Heart left ventricle (tissue), 16 donors: ENCODE measurements at regions of chr7 and their contacts with region 1.

Region 1: DNA sequence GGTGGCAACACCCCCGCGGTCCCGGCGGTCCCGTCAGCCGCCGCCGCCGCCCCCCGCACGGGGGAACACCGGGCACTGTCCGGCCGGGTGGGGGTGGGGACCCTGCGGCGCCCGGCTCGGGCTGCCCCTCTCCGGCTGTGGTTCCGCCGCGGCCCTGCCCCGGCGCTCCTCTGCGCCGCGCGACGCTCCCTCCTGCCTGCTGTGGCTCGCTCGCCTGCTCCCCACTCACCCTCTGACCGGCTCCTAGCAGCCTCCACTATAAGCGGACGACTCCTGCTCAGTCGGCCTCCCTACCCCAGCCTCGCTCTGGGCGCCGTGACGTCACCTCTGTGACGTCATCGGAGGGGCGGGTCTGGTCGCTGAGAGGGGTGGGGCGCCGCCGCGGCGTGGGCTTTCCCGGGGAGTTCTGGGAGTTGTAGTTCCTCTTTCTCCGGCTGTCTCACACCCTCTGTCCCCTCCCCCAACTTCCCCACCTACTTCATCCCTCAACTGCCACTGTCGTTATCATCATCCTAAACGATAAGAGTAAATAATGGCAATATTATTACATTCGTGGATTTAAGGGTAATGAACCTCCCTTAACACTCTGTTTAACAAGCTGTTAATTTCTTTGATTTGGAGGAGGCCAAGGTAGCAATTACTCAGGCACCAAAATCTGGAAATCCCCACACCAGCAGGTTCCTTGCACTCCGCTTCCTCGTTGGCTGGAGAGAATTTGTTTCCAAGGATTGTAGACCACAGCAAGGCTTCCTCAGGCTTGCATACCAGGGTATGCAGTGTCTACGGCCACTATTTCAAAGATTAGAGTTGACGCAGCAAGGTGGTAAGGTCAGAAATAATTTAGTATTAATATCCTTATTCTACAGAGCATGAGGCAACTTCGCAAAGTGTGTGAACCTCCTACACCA is at the start of gene UBE2H:
- DNase-seq: peak; percentile 91 to 97 (median 92)
- ATAC-seq: peak; percentile 83 to 93 (median 86)
- H3K4me3 ChIP-seq: peak within 1 kb of the TSS; percentile 61 to 99 (median 87)
- H3K27ac ChIP-seq: peak within 1 kb of the TSS; percentile 93 to 99 (median 96)
- H3K4me1 ChIP-seq: peaks cover 7 to 39% (median 21%) of the 10 kb centered on the region in 12 donors
- H3K27me3 ChIP-seq: no peaks in the 10 kb centered on the region
- CTCF ChIP-seq: no peak
- POLR2A ChIP-seq: peak; percentile 98 to 99
- total RNA-seq, gene UBE2H: 92.8 to 219 (median 130) TPM

Region 2: DNA sequence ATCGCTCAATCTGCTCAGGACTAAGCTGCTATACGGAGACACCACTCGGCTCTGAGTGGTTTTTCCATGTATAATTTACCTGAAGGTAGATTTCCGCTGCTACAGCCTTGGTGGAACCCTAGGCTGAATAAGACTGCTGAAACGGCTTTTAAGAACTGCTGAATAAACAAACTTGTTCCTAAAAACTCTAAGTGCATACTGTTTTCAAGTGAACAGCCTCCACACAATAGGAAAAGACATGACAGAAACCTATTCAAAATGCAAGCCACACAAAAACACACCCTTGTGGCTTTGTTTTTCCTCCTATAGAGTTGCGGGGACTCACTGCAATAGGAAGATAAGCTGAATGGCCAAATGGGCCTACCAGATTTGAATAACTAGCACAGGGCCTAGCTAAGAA is 117.3 kb before region 1 on chr7:
- intact Hi-C with region 1: loop called in 9 of 10 experiments (anchors 2 to 10 kb)
- DNase-seq: no peak
- ATAC-seq: no peak
- H3K4me3 ChIP-seq: no peak overlapping the region
- H3K27ac ChIP-seq: peak overlapping the region in 4 of 12 donors; percentile 21 to 65 (median 47)
- H3K4me1 ChIP-seq: peaks cover 6 to 55% (median 27%) of the 10 kb centered on the region in 12 donors
- H3K27me3 ChIP-seq: no peaks in the 10 kb centered on the region
- CTCF ChIP-seq: no peak
- POLR2A ChIP-seq: no peak

Region 3: GRCh38 chr7:129845178-129845971 is 107.5 kb before region 1 on chr7:
- intact Hi-C with region 1: loop called in 1 of 10 experiments (anchors 10 kb)
- DNase-seq: no peak
- ATAC-seq: peak; percentile 17 to 58 (median 34)
- H3K4me3 ChIP-seq: no peak overlapping the region
- H3K27ac ChIP-seq: peak overlapping the region in 9 of 12 donors; percentile 6 to 67 (median 40)
- H3K4me1 ChIP-seq: peaks cover 2 to 78% (median 53%) of the 10 kb centered on the region in 12 donors
- H3K27me3 ChIP-seq: no peaks in the 10 kb centered on the region
- CTCF ChIP-seq: no peak
- POLR2A ChIP-seq: no peak

Region 4: GRCh38 chr7:129864042-129864441 is 88.9 kb before region 1 on chr7:
- intact Hi-C with region 1: loop called in 4 of 10 experiments (anchors 5 kb)
- DNase-seq: peak in 4 of 5 donors; percentile 22 to 60 (median 40)
- ATAC-seq: peak; percentile 61 to 88 (median 70)
- H3K4me3 ChIP-seq: no peak overlapping the region
- H3K27ac ChIP-seq: peak overlapping the region; percentile 9 to 90 (median 83)
- H3K4me1 ChIP-seq: peaks cover 3 to 91% (median 78%) of the 10 kb centered on the region in 12 donors
- H3K27me3 ChIP-seq: no peaks in the 10 kb centered on the region
- CTCF ChIP-seq: no peak
- POLR2A ChIP-seq: no peak

Region 5: GRCh38 chr7:129882531-129882930 is 70.4 kb before region 1 on chr7:
- intact Hi-C with region 1: loop called in 1 of 10 experiments (anchors 10 kb)
- DNase-seq: no peak
- ATAC-seq: no peak
- H3K4me3 ChIP-seq: no peak overlapping the region
- H3K27ac ChIP-seq: no peak overlapping the region
- H3K4me1 ChIP-seq: peaks cover 0 to 45% (median 22%) of the 10 kb centered on the region in 12 donors
- H3K27me3 ChIP-seq: no peaks in the 10 kb centered on the region
- CTCF ChIP-seq: no peak
- POLR2A ChIP-seq: no peak

Region 6: DNA sequence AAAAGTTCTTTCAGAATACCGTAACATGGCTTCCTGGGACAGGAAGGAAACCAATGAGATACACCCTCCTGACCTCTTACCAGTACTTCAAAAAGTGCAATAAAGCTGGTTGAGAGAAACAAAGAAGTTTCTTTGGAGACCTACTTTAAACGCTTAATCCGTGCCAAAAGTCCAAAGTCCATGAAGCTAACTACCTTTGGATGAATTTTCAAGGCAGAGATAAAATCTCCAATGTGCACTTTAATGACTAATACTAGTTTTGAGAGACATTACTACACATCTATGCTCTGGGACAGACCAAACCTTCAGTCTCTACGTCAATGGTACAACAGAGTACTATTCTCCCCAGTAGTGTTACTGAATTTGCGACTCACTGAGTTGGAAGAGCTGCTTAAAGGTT is 46.2 kb before region 1 on chr7:
- intact Hi-C with region 1: loop called in 3 of 10 experiments (anchors 5 kb)
- DNase-seq: no peak
- ATAC-seq: peak; percentile 56 to 84 (median 72)
- H3K4me3 ChIP-seq: no peak overlapping the region
- H3K27ac ChIP-seq: peak overlapping the region in 11 of 12 donors; percentile 31 to 85 (median 54)
- H3K4me1 ChIP-seq: peaks cover 0 to 75% (median 50%) of the 10 kb centered on the region in 12 donors
- H3K27me3 ChIP-seq: no peaks in the 10 kb centered on the region
- CTCF ChIP-seq: no peak
- POLR2A ChIP-seq: no peak

Region 7: DNA sequence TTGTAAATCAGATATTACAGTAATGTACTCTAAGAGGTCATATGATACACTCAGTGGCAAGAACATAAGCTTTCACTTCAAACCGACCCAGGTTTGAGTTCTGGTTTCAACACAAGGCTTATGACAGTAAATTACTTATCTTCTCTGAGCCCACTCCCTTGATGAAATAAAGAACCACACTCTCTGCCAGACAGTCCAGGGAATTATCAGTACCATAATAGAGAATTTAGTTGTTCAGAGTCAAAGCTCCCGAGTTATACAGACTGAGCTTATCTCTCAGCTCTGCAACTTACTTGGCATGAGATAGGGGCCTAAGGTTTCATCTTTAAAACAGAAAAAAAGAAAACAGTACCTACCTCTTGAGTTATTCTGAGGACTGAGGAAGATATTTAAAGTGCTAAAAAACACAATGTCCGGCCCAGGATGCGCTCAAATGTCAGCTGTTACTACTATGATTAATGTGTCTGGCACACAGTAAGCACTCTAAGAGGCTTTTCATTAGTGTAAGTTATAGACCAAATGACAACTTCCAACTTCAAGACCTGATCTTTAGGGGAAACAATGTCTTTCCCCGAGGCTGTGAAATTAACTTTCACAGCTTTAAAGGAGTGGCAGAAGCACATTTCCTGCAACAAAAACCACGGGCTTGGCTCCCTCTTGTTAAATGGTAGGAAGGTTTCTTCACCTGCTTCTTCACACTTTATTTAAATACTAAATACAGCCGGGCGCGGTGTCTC is 38.2 kb before region 1 on chr7:
- intact Hi-C with region 1: loop called in 4 of 10 experiments (anchors 5 kb)
- DNase-seq: no peak
- ATAC-seq: peak in 2 of 4 donors; percentile 14 to 31
- H3K4me3 ChIP-seq: no peak overlapping the region
- H3K27ac ChIP-seq: peak overlapping the region in 8 of 12 donors; percentile 5 to 53 (median 36)
- H3K4me1 ChIP-seq: peaks cover 13 to 66% (median 52%) of the 10 kb centered on the region in 12 donors
- H3K27me3 ChIP-seq: no peaks in the 10 kb centered on the region
- CTCF ChIP-seq: no peak
- POLR2A ChIP-seq: no peak

Region 8: DNA sequence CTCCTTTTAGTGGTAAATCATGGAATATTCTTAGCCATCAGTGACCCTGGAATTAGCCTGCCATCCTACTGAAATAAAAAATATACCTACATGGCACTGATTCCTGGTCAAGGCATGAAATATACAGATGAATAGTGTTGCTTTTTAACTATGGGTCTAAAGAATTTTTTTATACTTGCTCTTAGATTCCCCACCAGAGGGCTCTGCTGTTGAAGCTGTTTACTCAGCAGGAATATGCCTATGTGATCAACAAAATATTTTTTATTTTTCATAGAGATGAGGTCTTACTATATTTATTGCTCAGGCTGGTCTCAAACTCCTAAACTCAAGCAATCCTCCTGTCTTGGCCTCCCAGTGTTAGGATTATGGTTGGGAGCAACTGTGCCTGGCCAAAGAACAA is 84.8 kb after region 1 on chr7:
- intact Hi-C with region 1: no loop called
- DNase-seq: no peak
- ATAC-seq: no peak
- H3K4me3 ChIP-seq: no peak overlapping the region
- H3K27ac ChIP-seq: no peak overlapping the region
- H3K4me1 ChIP-seq: no peaks in the 10 kb centered on the region
- H3K27me3 ChIP-seq: no peaks in the 10 kb centered on the region
- CTCF ChIP-seq: peak in 3 of 12 donors; percentile 10 to 26 (median 24)
- POLR2A ChIP-seq: no peak